ENCODE measurements at regions of chr12 and their contacts with region 1.

Region 1: GRCh38 chr12:107131832-107132616 is 38.7 kb upstream of the CRY1 start:
- DNase-seq: peak; percentile 42
- H3K4me3 ChIP-seq: no peak overlapping the region
- H3K27ac ChIP-seq: no peak overlapping the region
- H3K4me1 ChIP-seq: no peaks in the 10 kb centered on the region
- H3K27me3 ChIP-seq: no peaks in the 10 kb centered on the region
- CTCF ChIP-seq: peak; percentile 47 to 87 (median 82)
- POLR2A ChIP-seq: no peak

Region 2: GRCh38 chr12:107027636-107028053 is 104.4 kb before region 1 on chr12:
- intact Hi-C with region 1: no loop called
- DNase-seq: peak; percentile 49
- H3K4me3 ChIP-seq: no peak overlapping the region
- H3K27ac ChIP-seq: peak overlapping the region; percentile 79 to 81
- H3K4me1 ChIP-seq: peaks cover 5% of the 10 kb centered on the region
- H3K27me3 ChIP-seq: no peaks in the 10 kb centered on the region
- CTCF ChIP-seq: no peak
- POLR2A ChIP-seq: no peak

Region 3: GRCh38 chr12:107169200-107169599 is 37.2 kb after region 1 on chr12:
- intact Hi-C with region 1: no loop called
- DNase-seq: peak; percentile 13
- H3K4me3 ChIP-seq: no peak overlapping the region
- H3K27ac ChIP-seq: no peak overlapping the region
- H3K4me1 ChIP-seq: no peaks in the 10 kb centered on the region
- H3K27me3 ChIP-seq: no peaks in the 10 kb centered on the region
- CTCF ChIP-seq: no peak
- POLR2A ChIP-seq: no peak

Region 4: DNA sequence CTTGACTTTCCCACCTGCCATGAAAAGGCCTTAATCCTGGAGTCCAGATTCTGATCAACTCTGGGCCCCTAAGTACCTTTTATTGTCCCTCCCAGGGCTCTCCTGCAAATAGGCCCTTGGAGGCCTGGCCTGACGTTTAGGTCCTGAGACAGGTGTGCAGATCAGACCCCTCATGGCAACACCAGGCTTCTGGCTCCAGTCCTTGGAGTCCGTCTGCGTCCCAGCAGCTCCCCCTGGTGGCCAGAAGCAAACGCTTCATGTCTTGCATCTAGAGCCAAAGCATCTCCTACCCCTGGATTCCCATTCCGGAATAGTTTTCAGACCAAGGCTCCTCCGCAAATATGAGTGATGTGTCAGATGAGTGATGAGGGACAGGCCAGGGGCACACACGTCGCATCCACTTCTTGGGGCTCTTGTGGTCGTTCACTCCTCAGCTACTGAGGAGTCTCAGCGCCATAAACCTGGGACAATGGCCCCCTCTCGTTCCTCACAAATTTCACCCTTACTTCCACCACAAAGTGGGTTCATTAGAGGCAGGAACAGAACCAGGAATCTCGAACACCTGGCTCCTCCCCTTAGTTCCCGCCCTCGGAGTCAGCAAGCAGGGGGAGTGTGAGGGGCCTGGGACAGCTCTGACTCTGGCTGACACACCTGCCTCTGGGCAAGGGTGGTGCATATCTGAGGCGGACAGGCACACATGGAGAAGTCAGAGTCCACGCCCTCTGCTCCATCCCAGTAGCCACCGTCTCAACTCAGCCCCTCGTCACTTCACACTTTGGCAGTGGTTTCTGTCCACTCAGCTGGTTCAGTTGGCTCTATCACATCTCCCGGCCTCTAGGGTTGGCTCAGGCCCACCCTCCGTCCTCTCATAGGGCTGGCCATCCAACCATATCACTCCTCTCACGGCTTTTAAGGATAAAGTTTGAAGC is 475.7 kb after region 1 on chr12:
- intact Hi-C with region 1: loop called (anchors 2 kb)
- DNase-seq: peak; percentile 74
- H3K4me3 ChIP-seq: no peak overlapping the region
- H3K27ac ChIP-seq: no peak overlapping the region
- H3K4me1 ChIP-seq: no peaks in the 10 kb centered on the region
- H3K27me3 ChIP-seq: no peaks in the 10 kb centered on the region
- CTCF ChIP-seq: peak; percentile 85 to 95 (median 88)
- POLR2A ChIP-seq: no peak

Measured in prostate gland (tissue), 2 donors.